ENCODE measurements at regions of chr6 and their contacts with region 1.

Region 1: DNA sequence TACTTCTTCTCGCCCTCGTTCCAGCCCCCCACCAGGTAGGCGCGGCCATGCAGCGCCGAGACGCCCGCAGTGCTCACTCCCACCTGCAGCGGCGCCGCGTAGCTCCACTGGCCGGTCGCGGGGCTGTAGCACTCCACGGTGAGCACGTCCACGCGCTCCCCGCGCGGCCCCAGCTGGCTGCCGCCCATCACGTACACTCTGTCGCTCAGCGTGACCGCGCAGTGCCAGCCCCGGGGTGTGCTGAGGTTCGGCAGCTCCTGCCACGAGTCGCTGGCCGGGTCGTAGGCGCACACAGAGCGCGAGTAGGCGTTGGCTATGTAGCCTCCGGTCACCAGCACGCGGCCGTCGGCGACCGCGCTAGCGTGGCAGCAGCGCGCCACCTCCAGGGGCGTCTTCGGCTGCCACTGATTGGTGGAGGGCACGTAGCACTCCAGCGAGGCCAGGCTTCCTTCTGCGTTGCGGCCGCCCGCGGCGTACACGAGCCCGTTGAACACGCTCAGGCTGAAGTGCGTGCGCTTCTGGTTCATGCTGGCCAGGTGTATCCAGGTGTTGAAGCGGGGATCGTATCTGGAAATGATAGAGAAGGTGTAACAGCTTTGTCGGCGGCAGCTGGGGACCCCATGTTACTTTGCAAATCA is 13.7 kb downstream of the KLHL31 start:
- DNase-seq: no peak
- H3K4me3 ChIP-seq: peak overlapping the region; percentile 53
- CTCF ChIP-seq: peak; percentile 26

Region 2: GRCh38 chr6:53309059-53309900 is 342.6 kb before region 1 on chr6:
- in situ Hi-C with region 1: no loop called
- DNase-seq: no peak
- H3K4me3 ChIP-seq: no peak overlapping the region
- CTCF ChIP-seq: no peak

Region 3: GRCh38 chr6:53524455-53524815 is 127.4 kb before region 1 on chr6:
- in situ Hi-C with region 1: loop called (anchors 25 kb)
- DNase-seq: no peak
- H3K4me3 ChIP-seq: no peak overlapping the region
- CTCF ChIP-seq: no peak

Region 4: GRCh38 chr6:53547815-53548496 is 103.9 kb before region 1 on chr6:
- in situ Hi-C with region 1: no loop called
- DNase-seq: peak; percentile 88
- H3K4me3 ChIP-seq: peak overlapping the region; percentile 55
- CTCF ChIP-seq: no peak